BJ (cell line): ENCODE measurements at regions of chr11 and their contacts with region 1.

Region 1: DNA sequence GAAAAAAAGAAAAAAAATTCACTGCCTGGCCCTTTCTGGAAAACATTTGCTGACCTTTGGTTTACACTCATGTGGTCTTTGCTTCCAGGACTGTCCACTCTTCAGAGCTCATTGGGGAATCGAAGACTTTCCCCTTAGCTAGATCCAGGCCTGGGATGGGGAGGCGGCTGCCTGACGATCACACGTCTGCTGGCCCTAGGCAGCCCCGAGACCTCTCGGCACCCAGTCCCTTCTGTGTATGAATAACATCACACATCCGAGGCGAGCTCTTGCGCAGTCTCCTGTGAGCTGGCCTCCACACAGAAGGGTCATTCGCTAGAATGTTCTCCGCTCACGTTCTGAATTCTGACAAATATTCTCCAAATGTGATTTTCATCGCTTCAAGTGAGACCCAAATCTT is 25.7 kb upstream of the GAL start:
- DNase-seq: peak; percentile 10
- H3K4me3 ChIP-seq: no peak overlapping the region
- H3K27me3 ChIP-seq: peaks cover 14% of the 10 kb centered on the region; the same call in 1 of the 2 replicates
- CTCF ChIP-seq: no peak

Region 2: DNA sequence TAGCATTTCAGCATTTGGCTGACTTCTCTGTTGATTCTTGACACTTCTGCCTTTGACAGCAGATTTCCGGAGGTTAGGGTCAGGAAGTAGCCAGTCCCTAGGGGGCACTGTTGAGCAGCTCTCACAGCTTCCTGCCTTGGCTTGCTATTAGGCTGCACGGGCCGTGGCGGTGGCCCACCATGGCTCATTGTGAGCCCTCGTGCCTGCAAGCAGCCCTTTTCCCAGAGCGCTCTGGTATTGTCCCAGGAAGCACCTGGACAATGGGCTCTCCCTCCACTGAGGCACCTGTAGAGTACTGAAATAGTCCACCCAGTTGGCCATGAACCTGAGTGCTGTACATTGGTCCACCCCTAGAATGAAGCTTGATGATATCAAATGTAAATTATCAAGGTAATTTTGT is 74.6 kb before region 1 on chr11:
- CTCF ChIA-PET with region 1: no interaction called
- POLR2A ChIA-PET with region 1: no interaction called
- DNase-seq: no peak
- H3K4me3 ChIP-seq: no peak overlapping the region
- H3K27me3 ChIP-seq: no peaks in the 10 kb centered on the region
- CTCF ChIP-seq: peak; percentile 55

Region 3: GRCh38 chr11:68643585-68643984 is 15.1 kb before region 1 on chr11:
- CTCF ChIA-PET with region 1: interaction called, 5 read pairs
- POLR2A ChIA-PET with region 1: interaction called, 11 read pairs
- DNase-seq: no peak
- H3K4me3 ChIP-seq: no peak overlapping the region
- H3K27me3 ChIP-seq: peaks cover 23% of the 10 kb centered on the region
- CTCF ChIP-seq: 0 out of 2 replicates have a peak, but pooled peaks have one; percentile 6

Region 4: GRCh38 chr11:68677432-68677831 is 18.8 kb after region 1 on chr11:
- CTCF ChIA-PET with region 1: interaction called, 7 read pairs
- POLR2A ChIA-PET with region 1: interaction called, 22 read pairs
- DNase-seq: peak; percentile 59
- H3K4me3 ChIP-seq: no peak overlapping the region
- H3K27me3 ChIP-seq: peaks cover 6% of the 10 kb centered on the region
- CTCF ChIP-seq: no peak

Region 5: GRCh38 chr11:68687986-68688385 is 29.3 kb after region 1 on chr11:
- CTCF ChIA-PET with region 1: no interaction called
- POLR2A ChIA-PET with region 1: no interaction called
- DNase-seq: no peak
- H3K4me3 ChIP-seq: no peak overlapping the region
- H3K27me3 ChIP-seq: peaks cover 29% of the 10 kb centered on the region
- CTCF ChIP-seq: no peak